Tibial artery (tissue), 4 donors: ENCODE measurements at regions of chr1 and their contacts with region 1.

Region 1: DNA sequence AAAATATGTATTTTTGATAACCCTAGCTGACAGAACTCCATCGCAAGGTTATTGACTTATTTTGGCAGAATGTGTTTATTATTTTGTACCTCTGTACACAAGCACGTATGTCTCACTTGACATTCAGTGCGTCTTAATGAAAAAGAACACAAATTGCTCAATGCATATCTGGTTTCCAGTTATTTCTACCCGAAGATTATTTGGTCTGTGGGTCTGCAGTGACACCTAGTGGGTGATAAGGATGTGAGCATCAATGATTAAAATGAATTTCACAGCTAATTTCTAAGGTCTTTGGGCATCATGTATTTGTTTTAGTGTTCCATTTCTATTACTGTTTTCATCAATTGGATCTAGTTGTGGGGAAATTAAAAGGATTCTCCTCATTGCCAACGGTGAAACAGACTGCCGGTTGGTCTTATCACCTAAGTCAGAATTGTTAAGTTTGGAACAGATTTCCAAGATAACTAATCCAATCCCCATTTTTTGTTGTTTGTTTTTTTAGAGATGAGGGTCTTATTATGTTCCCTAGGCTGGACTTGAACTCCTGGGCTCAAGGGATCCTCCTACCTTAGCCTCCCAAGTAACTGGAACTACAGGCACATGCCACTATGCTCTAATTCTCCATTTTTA is 13.9 kb downstream of the DDX20 start:
- DNase-seq: no peak
- H3K4me3 ChIP-seq: no peak overlapping the region
- H3K27ac ChIP-seq: peak overlapping the region in 1 of 2 donors; percentile 23
- H3K4me1 ChIP-seq: no peaks in the 10 kb centered on the region
- H3K27me3 ChIP-seq: no peaks in the 10 kb centered on the region
- CTCF ChIP-seq: peak; percentile 86 to 87

Region 2: GRCh38 chr1:111481387-111482221 is 288.0 kb before region 1 on chr1:
- intact Hi-C with region 1: loop called (anchors 5 kb)
- DNase-seq: peak; percentile 80 to 89
- H3K4me3 ChIP-seq: no peak overlapping the region
- H3K27ac ChIP-seq: no peak overlapping the region
- H3K4me1 ChIP-seq: peaks cover 0 to 7% (median 0%) of the 10 kb centered on the region in 4 donors
- H3K27me3 ChIP-seq: no peaks in the 10 kb centered on the region
- CTCF ChIP-seq: peak; percentile 66 to 75